PC-3 (cell line): ENCODE measurements at regions of chr10 and their contacts with region 1.

Region 1: DNA sequence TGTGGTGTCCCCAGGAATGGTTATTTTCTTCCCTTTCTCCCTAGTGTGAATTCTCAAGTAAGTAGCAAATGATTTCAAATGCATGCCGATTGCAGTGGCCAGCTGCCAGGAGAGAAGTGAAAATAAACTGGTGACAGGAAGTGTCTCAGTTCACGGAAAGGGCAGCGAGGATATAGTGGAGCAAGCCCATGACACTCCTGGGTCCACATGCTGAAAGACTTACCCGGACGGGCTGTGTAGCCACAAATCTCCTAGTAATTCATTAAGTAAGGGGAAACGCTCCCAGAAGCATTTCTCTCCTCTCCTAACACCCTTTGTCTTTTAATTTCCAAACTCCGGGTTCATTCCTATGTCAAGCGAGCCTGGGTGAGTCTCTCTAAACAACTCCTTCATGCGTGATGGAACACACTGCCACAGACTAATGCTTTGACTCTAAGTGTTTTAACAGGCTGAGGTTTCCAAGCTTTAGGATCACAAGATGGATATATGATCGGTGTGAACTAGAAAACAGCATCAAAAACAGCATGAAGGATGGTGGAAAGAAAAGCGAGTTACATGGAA is 125.6 kb downstream of the CYP26A1 start:
- DNase-seq: peak; percentile 29
- ATAC-seq: no peak
- H3K4me3 ChIP-seq: peak overlapping the region; percentile 50; the same call in 1 of the 2 replicates
- H3K27ac ChIP-seq: no peak overlapping the region
- H3K4me1 ChIP-seq: peaks cover 8% of the 10 kb centered on the region
- H3K27me3 ChIP-seq: no peaks in the 10 kb centered on the region
- CTCF ChIP-seq: no peak

Region 2: DNA sequence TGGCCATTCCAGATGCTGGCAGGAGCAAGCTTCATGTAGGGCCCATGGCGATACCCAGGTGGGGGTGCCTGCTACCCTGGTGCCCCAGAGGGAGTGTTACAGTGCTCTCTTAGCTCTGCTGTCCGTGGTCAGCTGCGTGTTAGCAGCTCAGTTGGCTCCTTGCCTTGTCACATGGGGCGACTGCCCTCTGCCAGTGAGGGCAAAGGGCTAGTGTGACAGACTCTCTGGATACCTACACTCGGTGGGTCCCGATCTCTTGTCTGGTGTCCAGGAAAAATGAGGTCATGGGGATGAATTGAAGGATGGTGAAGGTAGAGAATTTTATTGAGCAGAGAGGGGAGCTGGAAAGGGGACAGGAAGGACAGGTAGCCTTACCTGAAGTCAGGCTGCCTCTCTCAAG is 26.7 kb after region 1 on chr10:
- CTCF ChIA-PET with region 1: no interaction called
- POLR2A ChIA-PET with region 1: interaction called, 14 read pairs
- intact Hi-C with region 1: no loop called
- DNase-seq: no peak
- ATAC-seq: no peak
- H3K4me3 ChIP-seq: no peak overlapping the region
- H3K27ac ChIP-seq: no peak overlapping the region
- H3K4me1 ChIP-seq: no peaks in the 10 kb centered on the region
- H3K27me3 ChIP-seq: no peaks in the 10 kb centered on the region
- CTCF ChIP-seq: no peak

Region 3: DNA sequence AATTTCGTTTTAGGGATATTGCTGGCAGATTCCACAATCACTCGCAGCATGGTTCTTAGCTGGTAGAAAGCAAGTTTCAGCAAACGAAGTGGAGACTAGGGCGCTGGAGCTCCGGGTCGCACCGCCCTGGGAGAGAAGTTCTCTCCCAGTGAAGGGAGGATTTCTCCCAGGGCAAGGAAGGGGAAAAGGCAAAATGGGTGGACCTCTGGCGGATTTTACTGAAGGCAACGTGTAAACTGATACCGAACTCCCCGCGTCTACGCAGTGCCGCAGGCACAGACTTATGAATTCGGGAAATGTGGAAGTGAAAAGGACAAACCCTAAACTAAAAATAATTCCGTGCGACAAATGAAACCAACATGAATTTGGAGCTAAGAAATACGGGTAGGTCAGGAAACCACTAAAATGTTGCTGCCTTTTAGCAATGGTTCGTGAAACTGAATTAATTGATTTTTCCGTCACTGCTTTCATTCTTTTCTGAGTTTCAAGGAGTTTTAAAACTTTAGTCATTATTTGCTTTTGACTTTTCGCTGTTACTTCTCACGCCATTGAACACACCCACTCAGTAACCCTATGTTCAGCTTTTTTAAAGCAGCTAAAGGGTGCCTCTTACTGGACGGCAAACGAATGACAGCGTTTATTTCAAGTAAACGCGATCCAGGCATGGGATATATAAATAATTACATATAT is 283.0 kb after region 1 on chr10 and contains the start of gene MYOF:
- CTCF ChIA-PET with region 1: no interaction called
- POLR2A ChIA-PET with region 1: no interaction called
- intact Hi-C with region 1: no loop called
- DNase-seq: peak; percentile 88
- ATAC-seq: peak; percentile 71
- H3K4me3 ChIP-seq: peak within 1 kb of the TSS; percentile 97
- H3K27ac ChIP-seq: peak within 1 kb of the TSS; percentile 100
- H3K4me1 ChIP-seq: peaks cover 24% of the 10 kb centered on the region
- H3K27me3 ChIP-seq: no peaks in the 10 kb centered on the region
- CTCF ChIP-seq: peak; percentile 46; the same call in 1 of the 2 replicates
- total RNA-seq, gene MYOF: 174 and 189 TPM in 2 replicates